ENCODE measurements at regions of chr3 and their contacts with region 1.

Region 1: GRCh38 chr3:58188173-58188564 is 22.6 kb downstream of the DNASE1L3 start:
- DNase-seq: no peak
- H3K4me3 Mint-ChIP-seq: no peak overlapping the region
- H3K27ac Mint-ChIP-seq: no peak overlapping the region
- H3K4me1 Mint-ChIP-seq: peaks cover 3% of the 10 kb centered on the region
- H3K27me3 Mint-ChIP-seq: no peaks in the 10 kb centered on the region

Region 2: DNA sequence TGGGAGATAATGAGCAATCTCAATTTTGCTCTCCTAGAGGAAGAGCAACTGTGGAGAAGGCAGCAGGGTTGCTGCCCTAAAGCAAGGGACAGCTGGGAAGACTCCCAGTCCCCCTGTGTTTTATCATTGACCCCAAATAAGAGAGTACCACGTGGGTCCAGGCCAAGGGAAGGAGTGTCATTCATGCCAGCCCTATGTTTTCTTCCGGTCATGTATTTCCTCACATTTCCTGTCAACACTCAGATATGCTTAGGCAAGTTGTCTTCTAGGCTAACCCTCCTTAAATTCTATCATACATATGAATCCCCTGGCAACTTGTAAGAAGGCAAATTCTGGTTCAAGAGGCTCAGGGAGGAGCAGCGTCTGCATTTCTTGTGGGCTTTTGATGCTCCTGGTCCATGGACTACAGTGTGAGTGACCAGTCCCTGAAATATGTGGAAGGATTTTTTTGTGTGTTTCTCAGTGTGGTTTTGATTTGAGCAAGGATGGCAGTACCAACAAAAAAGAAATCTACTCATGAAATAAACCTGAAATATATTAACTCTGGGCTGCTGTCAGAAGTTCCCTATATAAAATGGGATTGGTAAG is 86.0 kb after region 1 on chr3:
- intact Hi-C with region 1: no loop called
- DNase-seq: no peak
- H3K4me3 Mint-ChIP-seq: no peak overlapping the region
- H3K27ac Mint-ChIP-seq: no peak overlapping the region
- H3K4me1 Mint-ChIP-seq: peaks cover 10% of the 10 kb centered on the region
- H3K27me3 Mint-ChIP-seq: no peaks in the 10 kb centered on the region

Region 3: DNA sequence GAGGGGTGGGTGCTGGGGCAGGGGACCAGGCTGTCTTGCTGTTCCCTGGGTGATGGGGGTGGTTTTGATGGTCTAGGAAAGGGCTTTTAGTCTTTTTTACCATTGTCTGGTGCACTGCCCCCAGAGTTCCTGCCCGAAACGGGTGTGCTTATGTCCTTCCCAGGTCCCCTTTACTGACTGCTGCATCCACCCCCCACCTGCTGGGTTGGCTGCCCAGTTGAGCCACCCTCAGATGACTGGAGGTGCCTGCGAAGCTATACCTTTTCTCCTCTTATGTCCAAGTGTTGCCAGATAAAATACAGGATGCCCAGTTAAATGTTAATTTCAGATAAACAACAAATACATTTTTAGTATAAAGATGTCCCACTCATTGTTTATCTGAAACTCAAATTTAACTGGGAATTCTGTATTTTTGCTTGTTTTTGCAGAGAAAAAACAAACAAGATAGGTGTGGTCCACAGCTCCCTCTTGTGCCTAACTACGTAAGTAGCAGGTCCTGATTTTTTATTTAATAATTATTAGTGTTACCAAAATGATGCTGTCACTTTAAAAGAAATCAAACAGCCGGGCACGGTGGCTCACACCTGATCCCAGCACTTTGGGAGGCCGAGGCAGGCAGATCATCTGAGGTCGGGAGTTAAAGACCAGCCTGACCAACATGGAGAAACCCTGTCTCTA is 111.8 kb after region 1 on chr3:
- intact Hi-C with region 1: loop called (anchors 1 kb)
- DNase-seq: no peak
- H3K4me3 Mint-ChIP-seq: no peak overlapping the region
- H3K27ac Mint-ChIP-seq: no peak overlapping the region
- H3K4me1 Mint-ChIP-seq: peaks cover under 1% of the 10 kb centered on the region
- H3K27me3 Mint-ChIP-seq: no peaks in the 10 kb centered on the region

Region 4: DNA sequence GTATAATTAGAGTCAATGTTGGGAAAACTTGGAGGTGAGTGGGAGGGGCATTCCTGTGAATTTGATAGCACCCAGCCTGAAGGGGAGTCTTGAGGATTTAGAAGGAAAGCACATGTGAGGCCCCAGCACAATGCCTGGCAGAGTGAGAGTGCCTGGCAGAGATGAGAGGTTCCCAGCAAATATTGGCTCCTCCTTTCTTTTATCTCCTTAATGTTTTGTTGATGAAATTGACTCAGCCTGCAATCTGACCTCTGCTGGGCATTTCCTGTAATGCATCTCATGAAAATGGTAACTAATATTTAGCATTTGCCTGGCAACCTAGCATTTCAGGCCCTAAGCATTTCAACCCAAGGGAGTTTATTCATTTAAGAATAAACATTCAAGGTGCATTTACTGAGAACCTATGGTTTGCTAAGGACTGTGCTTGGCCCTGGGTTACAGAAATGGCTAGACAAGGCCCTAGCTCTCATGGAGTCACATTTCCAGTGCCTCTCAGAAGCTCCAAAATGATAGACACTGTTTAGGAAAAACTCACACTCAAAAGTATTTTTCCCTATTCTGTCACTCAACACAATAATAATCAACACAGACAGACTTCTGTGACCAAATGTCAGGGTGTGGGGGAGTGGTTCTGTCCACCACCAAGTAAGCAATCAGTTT is 226.5 kb after region 1 on chr3:
- intact Hi-C with region 1: loop called (anchors 10 kb)
- DNase-seq: peak; percentile 37
- H3K4me3 Mint-ChIP-seq: no peak overlapping the region
- H3K27ac Mint-ChIP-seq: peak overlapping the region; percentile 45
- H3K4me1 Mint-ChIP-seq: peaks cover 14% of the 10 kb centered on the region
- H3K27me3 Mint-ChIP-seq: no peaks in the 10 kb centered on the region

Region 5: GRCh38 chr3:58463181-58463941 is 275.2 kb after region 1 on chr3:
- intact Hi-C with region 1: no loop called
- DNase-seq: peak; percentile 61
- H3K4me3 Mint-ChIP-seq: no peak overlapping the region
- H3K27ac Mint-ChIP-seq: no peak overlapping the region
- H3K4me1 Mint-ChIP-seq: peaks cover 19% of the 10 kb centered on the region
- H3K27me3 Mint-ChIP-seq: peaks cover 4% of the 10 kb centered on the region